ENCODE measurements at regions of chr10 and their contacts with region 1.

Region 1: DNA sequence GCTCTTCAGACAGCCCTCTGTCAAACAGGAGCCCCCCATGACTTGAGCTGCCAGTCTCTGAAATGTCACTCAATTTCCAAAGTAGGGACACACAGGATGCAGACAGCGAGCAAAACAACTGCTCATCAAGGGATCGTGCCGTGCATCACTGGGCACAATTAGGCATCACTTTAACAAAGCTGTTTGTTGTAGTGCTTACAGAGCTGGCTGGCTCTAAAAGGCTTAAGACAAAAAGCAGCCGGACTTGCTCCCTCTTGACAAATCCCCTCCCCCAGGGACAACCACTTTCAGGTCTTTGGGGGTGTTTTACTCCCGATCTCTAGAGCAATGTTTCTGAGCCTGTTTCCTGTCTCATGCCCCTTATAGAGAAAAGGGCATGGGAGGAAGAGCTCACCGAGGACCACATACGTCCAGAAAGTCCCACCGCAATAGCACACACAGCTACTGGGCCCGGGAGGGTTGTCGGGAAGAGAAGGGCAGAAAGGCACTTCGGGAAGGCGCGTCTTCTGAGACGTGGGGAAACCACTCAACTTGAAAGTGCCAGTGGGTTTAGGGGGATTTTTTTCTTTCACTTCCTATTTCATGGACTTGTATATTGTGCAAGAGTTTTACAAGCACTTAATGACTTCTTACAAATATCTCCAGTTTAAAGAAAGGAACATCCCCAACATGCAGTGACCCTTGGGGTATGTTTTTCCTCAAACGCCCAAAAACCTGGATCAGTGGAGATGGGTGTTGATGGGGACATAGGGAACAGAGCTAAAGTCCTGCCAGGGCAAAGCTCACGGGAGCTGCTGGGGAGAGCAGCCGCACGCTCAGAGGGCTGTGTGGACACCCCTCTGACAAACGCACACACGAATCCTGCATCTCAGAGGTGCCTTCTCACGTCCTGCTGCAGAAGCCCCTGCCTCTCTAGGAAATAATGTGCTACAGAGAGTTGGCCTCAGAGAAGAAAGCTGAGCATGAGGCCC is 27.1 kb downstream of the LRRC20 start:
- DNase-seq: peak; percentile 71 to 91 (median 88)
- H3K4me3 ChIP-seq: peak overlapping the region in 2 of 3 experiments; percentile 3 to 70
- H3K4me3 Mint-ChIP-seq: peak overlapping the region; percentile 69 to 82
- H3K27ac ChIP-seq: peak overlapping the region; percentile 77 to 89
- H3K27ac Mint-ChIP-seq: peak overlapping the region; percentile 96 to 98 (median 97)
- H3K4me1 ChIP-seq: peaks cover 77 to 81% of the 10 kb centered on the region in 2 donors
- H3K4me1 Mint-ChIP-seq: peaks cover 79% of the 10 kb centered on the region
- H3K27me3 ChIP-seq: no peaks in the 10 kb centered on the region
- H3K27me3 Mint-ChIP-seq: peaks cover 0 to 2% (median 0%) of the 10 kb centered on the region in 3 donors
- CTCF ChIP-seq: no peak

Region 2: DNA sequence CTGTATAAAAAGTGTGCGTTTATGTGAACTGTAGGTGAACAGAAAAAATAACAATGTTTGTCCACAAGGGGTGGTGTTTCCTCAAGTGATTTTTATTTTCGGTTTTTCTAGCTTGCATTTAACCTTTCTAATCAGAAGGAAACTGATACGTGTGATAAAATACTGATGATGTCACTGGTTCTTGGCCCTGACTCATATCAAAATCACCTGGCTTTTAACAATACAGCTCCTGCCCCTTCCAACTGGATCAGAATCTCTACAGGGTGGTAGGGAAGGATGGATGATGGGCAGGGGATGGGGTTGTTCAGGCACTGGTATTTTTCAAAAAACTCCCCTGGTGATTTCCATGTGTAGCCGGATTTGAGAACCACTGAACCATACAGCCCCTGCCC is 82.4 kb before region 1 on chr10:
- intact Hi-C with region 1: loop called (anchors 5 kb)
- DNase-seq: peak in 2 of 3 donors; percentile 33 to 51
- H3K4me3 ChIP-seq: no peak overlapping the region
- H3K4me3 Mint-ChIP-seq: peak overlapping the region in 1 of 2 donors; percentile 42
- H3K27ac ChIP-seq: no peak overlapping the region
- H3K27ac Mint-ChIP-seq: no peak overlapping the region
- H3K4me1 ChIP-seq: peaks cover 36 to 48% of the 10 kb centered on the region in 2 donors
- H3K4me1 Mint-ChIP-seq: peaks cover 46% of the 10 kb centered on the region
- H3K27me3 ChIP-seq: no peaks in the 10 kb centered on the region
- H3K27me3 Mint-ChIP-seq: peaks cover 3 to 7% (median 3%) of the 10 kb centered on the region in 3 donors
- CTCF ChIP-seq: peak; percentile 81

Region 3: DNA sequence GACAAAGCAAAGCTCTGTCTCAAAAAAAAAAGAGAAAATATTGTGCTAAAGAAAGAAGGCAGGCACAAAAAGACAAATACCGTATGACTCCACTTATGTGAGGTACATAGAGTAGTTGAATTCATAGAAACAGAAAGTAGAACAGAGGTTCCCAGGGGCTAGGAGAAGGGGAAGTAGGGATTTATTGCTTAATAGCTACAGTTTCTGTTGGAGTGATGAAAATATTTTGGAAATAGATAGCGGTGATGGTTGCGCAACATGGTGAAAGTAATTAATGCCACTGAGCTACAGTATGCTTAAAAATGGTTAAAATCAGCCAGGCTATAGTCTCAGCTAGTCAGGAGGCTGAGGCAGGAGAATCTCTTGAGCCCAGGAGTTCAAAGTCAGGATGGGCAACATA is 53.0 kb before region 1 on chr10:
- intact Hi-C with region 1: loop called (anchors 10 kb)
- DNase-seq: peak; percentile 87 to 96 (median 92)
- H3K4me3 ChIP-seq: peak overlapping the region in 1 of 3 experiments; percentile 57
- H3K4me3 Mint-ChIP-seq: peak overlapping the region; percentile 49 to 75
- H3K27ac ChIP-seq: peak overlapping the region; percentile 79 to 85
- H3K27ac Mint-ChIP-seq: peak overlapping the region; percentile 88 to 97 (median 97)
- H3K4me1 ChIP-seq: peaks cover 85 to 87% of the 10 kb centered on the region in 2 donors
- H3K4me1 Mint-ChIP-seq: peaks cover 78% of the 10 kb centered on the region
- H3K27me3 ChIP-seq: no peaks in the 10 kb centered on the region
- H3K27me3 Mint-ChIP-seq: peaks cover 0 to 3% (median 1%) of the 10 kb centered on the region in 3 donors
- CTCF ChIP-seq: no peak

Region 4: GRCh38 chr10:70331486-70332268 is 23.7 kb before region 1 on chr10:
- intact Hi-C with region 1: loop called in 1 of 2 experiments (anchors 2 kb)
- DNase-seq: peak; percentile 94 to 98 (median 96)
- H3K4me3 ChIP-seq: peak overlapping the region in 1 of 3 experiments; percentile 58
- H3K4me3 Mint-ChIP-seq: peak overlapping the region; percentile 59 to 84
- H3K27ac ChIP-seq: peak overlapping the region in 1 of 2 donors; percentile 42
- H3K27ac Mint-ChIP-seq: peak overlapping the region; percentile 57 to 89 (median 83)
- H3K4me1 ChIP-seq: peaks cover 31 to 34% of the 10 kb centered on the region in 2 donors
- H3K4me1 Mint-ChIP-seq: peaks cover 51% of the 10 kb centered on the region
- H3K27me3 ChIP-seq: peaks cover 14 to 68% of the 10 kb centered on the region in 2 donors
- H3K27me3 Mint-ChIP-seq: peaks cover 66 to 89% (median 72%) of the 10 kb centered on the region in 3 donors
- CTCF ChIP-seq: peak; percentile 38

Measured in CD14-positive monocyte (primary cell).